H1 (cell line): ENCODE measurements at regions of chr5 and their contacts with region 1.

Region 1: DNA sequence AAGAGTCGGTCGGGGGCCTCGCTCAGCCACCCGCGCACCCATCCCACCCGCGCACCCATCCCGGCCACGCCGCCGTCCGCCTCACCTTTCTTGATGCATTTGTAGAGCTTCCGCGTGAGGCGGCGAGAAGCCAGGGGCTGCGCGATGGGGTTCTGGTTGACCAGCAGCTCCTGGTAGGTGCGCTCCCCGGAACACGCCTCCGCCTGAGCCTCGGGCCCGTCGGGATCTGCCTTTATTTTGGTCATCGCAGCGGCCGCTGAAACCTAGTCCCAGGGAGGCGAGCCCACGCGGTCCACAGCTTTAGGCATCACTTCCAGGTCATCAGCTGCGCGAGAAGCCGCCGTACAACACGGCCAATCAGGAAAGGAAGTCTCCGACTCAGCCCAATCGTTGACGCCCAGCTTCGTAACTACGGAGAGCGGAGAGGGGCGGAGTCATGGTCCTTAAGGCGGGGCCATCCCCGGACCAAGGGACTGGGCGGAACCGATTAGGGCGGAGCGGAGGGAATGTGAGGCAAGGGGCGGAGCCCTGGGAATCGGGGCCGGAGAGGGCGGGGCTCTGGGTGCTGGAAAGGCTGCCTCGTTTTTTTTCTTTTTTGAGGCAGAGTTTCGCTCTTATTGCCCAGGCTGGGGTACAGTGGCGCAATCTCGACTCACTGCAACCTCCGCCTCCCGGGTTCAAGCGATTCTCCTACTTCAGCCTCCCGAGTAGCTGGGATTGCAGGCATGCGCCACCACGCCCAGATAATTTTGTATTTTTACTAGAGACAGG is at the start of gene NHP2:
- DNase-seq: peak; percentile 95 to 99
- H3K4me3 ChIP-seq: peak within 1 kb of the TSS; percentile 81 to 89 (median 86)
- H3K27ac ChIP-seq: peak within 1 kb of the TSS; percentile 35; the same call in 1 of the 2 replicates
- H3K4me1 ChIP-seq: peaks cover 0 to 3% (median 2%) of the 10 kb centered on the region in 4 experiments; a peak in 4 of 7 replicates
- H3K27me3 ChIP-seq: no peaks in the 10 kb centered on the region
- CTCF ChIP-seq: no peak
- EP300 ChIP-seq: no peak
- POLR2A ChIP-seq: peak in 1 of 2 experiments; percentile 60; a peak in 2 of 3 replicates
- RAD21 ChIP-seq: no peak
- total RNA-seq, gene NHP2: 263 and 281 TPM in 2 replicates

Region 2: DNA sequence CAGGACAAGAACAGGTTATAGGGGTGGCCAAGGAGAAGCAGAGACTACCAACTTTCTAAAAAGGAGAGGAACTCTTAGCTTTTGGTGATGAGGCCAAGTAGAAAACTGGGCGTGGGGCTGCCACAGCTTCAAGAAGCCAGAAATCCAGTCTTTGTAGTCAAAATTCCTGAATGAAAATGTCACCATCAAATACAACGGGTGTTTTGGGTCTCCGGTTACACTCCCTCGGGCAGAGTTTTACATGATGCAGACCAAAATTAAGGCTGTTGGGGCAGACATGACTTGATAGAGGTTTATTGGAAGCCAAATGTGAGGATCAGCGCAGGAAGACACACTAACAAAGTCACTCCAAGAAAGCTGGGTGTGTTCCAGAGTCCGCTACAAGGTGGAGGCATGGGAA is 69.8 kb before region 1 on chr5:
- CTCF ChIA-PET with region 1: interaction called, 515 read pairs
- POLR2A ChIA-PET with region 1: interaction called, 13 read pairs
- DNase-seq: no peak
- H3K4me3 ChIP-seq: no peak overlapping the region
- H3K27ac ChIP-seq: no peak overlapping the region
- H3K4me1 ChIP-seq: peaks cover 0 to 5% (median 3%) of the 10 kb centered on the region in 4 experiments; a peak in 1 of 7 replicates
- H3K27me3 ChIP-seq: no peaks in the 10 kb centered on the region
- CTCF ChIP-seq: no peak
- EP300 ChIP-seq: no peak
- POLR2A ChIP-seq: no peak
- RAD21 ChIP-seq: no peak

Region 3: DNA sequence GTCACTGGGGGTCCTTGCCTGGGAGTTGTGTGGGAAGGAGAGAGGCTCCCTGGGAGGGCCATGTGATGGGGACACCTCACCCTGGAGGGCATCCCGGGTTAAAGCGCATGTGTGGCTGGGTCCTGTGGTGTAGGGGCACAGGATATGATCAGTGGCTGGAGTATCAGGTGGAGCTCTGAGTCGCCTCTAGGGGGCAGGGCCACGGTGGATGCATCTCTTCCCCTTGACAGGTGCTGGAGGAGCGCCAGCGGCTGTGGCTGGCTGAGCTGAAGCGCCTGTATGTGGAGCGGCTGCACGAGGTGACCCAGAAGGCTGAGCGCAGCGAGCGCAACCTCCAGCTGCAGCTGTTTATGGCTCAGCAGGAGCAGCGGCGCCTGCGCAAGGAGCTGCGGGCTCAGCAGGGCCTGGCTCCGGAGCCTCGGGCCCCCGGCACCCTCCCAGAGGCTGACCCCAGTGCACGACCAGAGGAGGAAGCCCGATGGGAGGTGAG is 32.8 kb before region 1 on chr5:
- CTCF ChIA-PET with region 1: interaction called, 149 read pairs
- POLR2A ChIA-PET with region 1: interaction called, 1,250 read pairs
- DNase-seq: peak; percentile 41 to 77
- H3K4me3 ChIP-seq: no peak overlapping the region
- H3K27ac ChIP-seq: no peak overlapping the region; the same call in 1 of the 2 replicates
- H3K4me1 ChIP-seq: peaks cover 11 to 64% (median 37%) of the 10 kb centered on the region in 4 experiments
- H3K27me3 ChIP-seq: no peaks in the 10 kb centered on the region
- CTCF ChIP-seq: peak in 2 of 3 experiments; percentile 74 to 88; a peak in 3 of 4 replicates
- EP300 ChIP-seq: no peak
- POLR2A ChIP-seq: no peak; a peak in 1 of 3 replicates
- RAD21 ChIP-seq: peak; percentile 38 to 61

Region 4: GRCh38 chr5:178130604-178131485 is 22.9 kb before region 1 on chr5 and contains the start of gene RMND5B:
- CTCF ChIA-PET with region 1: interaction called, 149 read pairs
- POLR2A ChIA-PET with region 1: interaction called, 1,250 read pairs
- DNase-seq: peak in 1 of 2 experiments; percentile 87
- H3K4me3 ChIP-seq: peak within 1 kb of the TSS; percentile 72 to 95 (median 78)
- H3K27ac ChIP-seq: peak within 1 kb of the TSS; percentile 86
- H3K4me1 ChIP-seq: peaks cover 4 to 17% (median 13%) of the 10 kb centered on the region in 4 experiments
- H3K27me3 ChIP-seq: no peaks in the 10 kb centered on the region
- CTCF ChIP-seq: peak in 1 of 3 experiments; percentile 11; a peak in 1 of 4 replicates
- EP300 ChIP-seq: peak in 1 of 2 experiments; percentile 95; a peak in 2 of 3 replicates
- POLR2A ChIP-seq: peak in 1 of 2 experiments; percentile 79; a peak in 2 of 3 replicates
- RAD21 ChIP-seq: no peak; a peak in 1 of 4 replicates
- total RNA-seq, gene RMND5B: 74.6 and 75.9 TPM in 2 replicates

Region 5: GRCh38 chr5:178163772-178164735 is 10.3 kb after region 1 on chr5:
- CTCF ChIA-PET with region 1: interaction called, 17 read pairs
- POLR2A ChIA-PET with region 1: interaction called, 16 read pairs
- DNase-seq: peak in 1 of 2 experiments; percentile 100
- H3K4me3 ChIP-seq: peak overlapping the region in 3 of 4 experiments; percentile 37 to 49 (median 48); a peak in 6 of 8 replicates
- H3K27ac ChIP-seq: no peak overlapping the region
- H3K4me1 ChIP-seq: peaks cover 0 to 6% (median 3%) of the 10 kb centered on the region in 4 experiments; a peak in 3 of 7 replicates
- H3K27me3 ChIP-seq: peaks cover 0 to 4% (median 2%) of the 10 kb centered on the region in 4 experiments; a peak in 1 of 7 replicates
- CTCF ChIP-seq: peak; percentile 94 to 100 (median 100)
- EP300 ChIP-seq: no peak
- POLR2A ChIP-seq: 0 out of 3 replicates have a peak, but pooled peaks of 1 of the 2 experiments have one; percentile 22
- RAD21 ChIP-seq: peak; percentile 96 to 98

Region 6: DNA sequence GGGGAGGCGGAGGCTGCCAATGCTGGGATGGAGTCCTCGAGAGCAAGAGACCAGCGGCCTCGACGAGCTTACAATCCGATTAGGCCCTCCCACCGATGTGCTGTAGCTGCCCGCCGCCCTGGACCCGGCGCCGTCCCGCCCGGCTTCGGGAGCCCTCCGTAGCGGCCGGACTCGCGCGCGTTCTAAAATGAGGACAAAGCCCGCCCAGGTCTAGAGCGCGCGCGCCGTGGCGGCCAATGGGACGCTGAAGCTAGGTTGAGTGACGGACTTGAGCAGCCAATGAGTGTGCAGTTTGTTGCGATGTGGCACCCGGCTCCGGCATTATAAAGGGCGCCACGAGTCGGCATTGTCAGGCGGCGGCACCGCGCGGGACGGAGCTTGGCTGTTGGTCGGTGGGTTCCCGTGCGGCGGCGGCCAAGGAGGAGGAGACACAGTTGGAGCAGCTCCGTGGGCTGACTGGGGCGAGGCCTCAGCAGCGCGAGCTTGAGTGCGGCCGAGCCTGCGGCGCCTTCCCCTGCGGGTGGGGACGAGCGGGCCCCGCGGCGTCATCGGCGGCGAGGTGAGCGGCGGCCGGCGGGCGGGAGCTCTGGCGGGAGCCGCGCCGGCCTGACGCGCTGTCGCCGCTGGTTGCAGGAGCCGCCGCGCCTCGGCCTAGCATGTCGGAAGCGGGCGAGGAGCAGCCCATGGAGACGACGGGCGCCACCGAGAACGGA is 50.6 kb after region 1 on chr5 and contains the start of gene HNRNPAB:
- CTCF ChIA-PET with region 1: interaction called, 3 read pairs
- POLR2A ChIA-PET with region 1: interaction called, 11 read pairs
- DNase-seq: peak; percentile 85 to 97
- H3K4me3 ChIP-seq: peak within 1 kb of the TSS; percentile 93 to 100 (median 100)
- H3K27ac ChIP-seq: peak within 1 kb of the TSS; percentile 95
- H3K4me1 ChIP-seq: peaks cover 0 to 10% (median 4%) of the 10 kb centered on the region in 4 experiments; a peak in 5 of 7 replicates
- H3K27me3 ChIP-seq: no peaks in the 10 kb centered on the region
- CTCF ChIP-seq: no peak
- EP300 ChIP-seq: 0 out of 3 replicates have a peak, but pooled peaks of 1 of the 2 experiments have one; percentile 8
- POLR2A ChIP-seq: peak; percentile 99 to 100
- RAD21 ChIP-seq: no peak
- total RNA-seq, gene HNRNPAB: 556 and 563 TPM in 2 replicates

Region 7: DNA sequence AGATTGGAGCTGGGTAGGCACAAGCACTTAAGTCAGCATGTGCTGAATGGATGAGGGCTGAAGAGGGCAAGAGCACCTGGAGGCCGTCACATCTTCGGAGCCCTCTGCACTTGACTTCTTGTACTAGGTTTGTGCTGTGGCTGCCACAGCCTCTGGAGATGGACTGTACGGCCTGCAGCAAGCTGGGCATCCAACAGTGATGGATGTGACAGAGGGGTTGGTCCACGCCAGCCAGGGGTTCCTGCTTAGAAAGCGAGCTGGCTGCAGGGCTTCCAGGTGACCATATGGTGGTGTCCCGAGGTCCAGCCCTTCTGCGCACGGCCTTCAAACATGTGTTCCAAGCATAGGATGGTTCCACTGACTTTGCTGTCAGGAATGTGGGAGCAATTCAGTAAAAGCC is 144.0 kb after region 1 on chr5:
- CTCF ChIA-PET with region 1: no interaction called
- POLR2A ChIA-PET with region 1: no interaction called
- DNase-seq: no peak
- H3K4me3 ChIP-seq: no peak overlapping the region
- H3K27ac ChIP-seq: no peak overlapping the region
- H3K4me1 ChIP-seq: no peaks in the 10 kb centered on the region
- H3K27me3 ChIP-seq: no peaks in the 10 kb centered on the region
- CTCF ChIP-seq: no peak
- EP300 ChIP-seq: no peak
- POLR2A ChIP-seq: no peak
- RAD21 ChIP-seq: no peak

Region 8: GRCh38 chr5:178312880-178313282 is 159.1 kb after region 1 on chr5:
- CTCF ChIA-PET with region 1: no interaction called
- POLR2A ChIA-PET with region 1: no interaction called
- DNase-seq: no peak
- H3K4me3 ChIP-seq: no peak overlapping the region
- H3K27ac ChIP-seq: no peak overlapping the region
- H3K4me1 ChIP-seq: peaks cover 0 to 5% (median 0%) of the 10 kb centered on the region in 4 experiments; a peak in 2 of 7 replicates
- H3K27me3 ChIP-seq: no peaks in the 10 kb centered on the region
- CTCF ChIP-seq: no peak
- EP300 ChIP-seq: no peak
- POLR2A ChIP-seq: no peak
- RAD21 ChIP-seq: no peak